Endothelial cell of umbilical vein (primary cell): ENCODE measurements at regions of chr19 and their contacts with region 1.

Region 1: DNA sequence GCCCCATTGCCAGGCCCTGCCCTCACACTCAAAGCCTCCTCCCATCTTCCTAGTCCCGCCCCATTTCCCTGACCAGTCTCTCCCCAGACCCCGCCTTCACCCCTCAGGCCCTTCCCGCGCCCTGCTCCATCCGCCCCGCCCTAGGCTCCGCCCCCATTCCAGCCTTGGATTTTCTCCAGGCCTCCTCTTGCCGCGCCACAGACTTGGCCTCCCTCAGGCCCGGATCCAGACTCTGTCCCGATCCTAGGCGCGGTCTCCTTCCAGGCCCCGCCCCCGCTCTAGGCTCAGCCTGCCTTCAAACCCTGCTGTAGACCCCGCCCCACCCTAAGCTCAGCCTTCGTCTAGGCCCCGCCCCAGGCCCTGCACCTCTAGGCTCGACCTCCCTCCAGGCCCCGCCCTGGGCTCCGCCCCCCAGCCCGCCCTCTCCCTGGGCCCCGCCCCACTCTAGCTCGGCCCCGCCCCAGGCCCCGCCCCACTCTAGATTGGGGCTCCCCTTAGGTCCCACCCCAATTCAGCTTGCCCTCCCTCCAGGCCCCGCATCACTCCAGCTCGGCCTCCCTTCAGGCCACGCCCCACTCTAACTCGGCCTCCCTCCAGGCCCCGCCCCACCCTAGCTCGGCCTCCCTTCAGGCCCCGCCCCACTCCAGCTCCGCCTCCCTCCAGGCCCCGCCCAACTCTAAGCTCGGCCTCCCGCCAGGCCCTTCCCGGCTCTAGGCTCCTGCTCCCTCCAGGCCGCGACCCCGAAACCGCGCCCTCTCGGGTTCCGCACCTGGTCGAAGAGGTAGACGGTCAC is 18.5 kb downstream of the LMTK3 start:
- DNase-seq: peak; percentile 97
- H3K4me3 ChIP-seq: peak overlapping the region; percentile 57 to 69 (median 62)
- H3K27ac ChIP-seq: no peak overlapping the region
- H3K4me1 ChIP-seq: peaks cover 16% of the 10 kb centered on the region
- H3K27me3 ChIP-seq: peaks cover 3 to 11% of the 10 kb centered on the region in 2 experiments
- CTCF ChIP-seq: no peak
- POLR2A ChIP-seq: peak; percentile 73

Region 2: DNA sequence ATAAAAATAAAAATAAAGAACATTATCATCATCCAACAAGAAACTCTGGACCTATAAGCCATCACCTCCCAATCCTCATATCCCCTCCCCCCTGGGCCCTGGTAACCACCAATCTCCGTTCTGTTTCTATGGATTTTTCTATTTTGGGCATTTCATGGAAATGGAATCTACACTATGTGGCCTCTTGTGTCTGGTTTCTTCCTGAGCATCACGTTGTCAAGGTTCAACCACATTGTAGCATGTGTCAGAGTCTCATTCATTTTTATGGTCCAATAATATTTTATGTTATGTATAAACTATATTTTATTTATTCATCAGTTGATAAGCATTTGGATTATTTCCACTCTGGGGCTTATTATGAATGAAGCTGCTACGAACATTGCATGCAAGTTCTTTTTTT is 85.8 kb after region 1 on chr19:
- CTCF ChIA-PET with region 1: interaction called, 203 read pairs
- POLR2A ChIA-PET with region 1: interaction called, 5 read pairs
- dilution Hi-C with region 1: no loop called
- intact Hi-C with region 1: loop called (anchors 1 kb)
- DNase-seq: no peak
- H3K4me3 ChIP-seq: no peak overlapping the region
- H3K27ac ChIP-seq: no peak overlapping the region
- H3K4me1 ChIP-seq: no peaks in the 10 kb centered on the region
- H3K27me3 ChIP-seq: no peaks in the 10 kb centered on the region
- CTCF ChIP-seq: no peak
- POLR2A ChIP-seq: no peak